Naive thymus-derived CD4-positive, alpha-beta T cell (primary cell): ENCODE measurements at regions of chr3 and their contacts with region 1.

Region 1: DNA sequence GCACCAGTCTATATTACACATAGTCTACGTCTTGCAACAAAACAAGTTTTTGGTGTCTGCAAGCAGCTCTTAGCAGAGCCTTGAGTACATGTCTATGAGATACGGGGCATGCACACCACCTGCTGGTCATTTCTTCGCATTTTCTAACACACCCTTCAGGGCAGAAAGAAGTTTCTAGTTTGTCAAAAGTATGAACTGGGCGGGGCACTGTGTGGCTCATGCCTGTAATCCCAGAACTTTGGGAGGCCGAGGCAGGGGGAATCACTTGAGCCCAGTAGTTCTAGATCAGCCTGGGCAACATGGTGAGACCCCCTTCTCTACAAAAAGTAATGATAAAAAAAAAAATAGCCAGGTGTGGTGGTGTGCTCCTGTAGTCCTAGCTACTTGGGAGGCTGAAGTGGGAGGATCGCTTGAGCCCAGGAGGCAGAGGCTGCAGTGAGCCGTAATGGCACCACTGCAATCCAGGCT is 64.2 kb upstream of the ARL8B start:
- DNase-seq: peak; percentile 22 to 75 (median 64)
- ATAC-seq: peak; percentile 92
- H3K4me3 ChIP-seq: no peak overlapping the region
- H3K4me3 Mint-ChIP-seq: peak overlapping the region in 1 of 10 donors; percentile 25
- H3K27ac ChIP-seq: no peak overlapping the region
- H3K27ac Mint-ChIP-seq: no peak overlapping the region
- H3K4me1 ChIP-seq: no peaks in the 10 kb centered on the region
- H3K4me1 Mint-ChIP-seq: peaks cover 0 to 38% (median 0%) of the 10 kb centered on the region in 7 donors
- H3K27me3 ChIP-seq: no peaks in the 10 kb centered on the region
- H3K27me3 Mint-ChIP-seq: peaks cover 0 to 4% (median 0%) of the 10 kb centered on the region in 5 donors

Region 2: GRCh38 chr3:4517643-4518311 is 540.1 kb before region 1 on chr3:
- CTCF ChIA-PET with region 1: interaction called, 4 read pairs
- POLR2A ChIA-PET with region 1: no interaction called
- intact Hi-C with region 1: loop called in 1 of 2 experiments (anchors 5 kb)
- DNase-seq: no peak
- ATAC-seq: no peak
- H3K4me3 ChIP-seq: no peak overlapping the region
- H3K4me3 Mint-ChIP-seq: peak overlapping the region; percentile 2 to 79 (median 50)
- H3K27ac ChIP-seq: peak overlapping the region; percentile 40
- H3K27ac Mint-ChIP-seq: peak overlapping the region; percentile 24 to 95 (median 79)
- H3K4me1 ChIP-seq: peaks cover 14 to 24% of the 10 kb centered on the region in 2 donors
- H3K4me1 Mint-ChIP-seq: peaks cover 31 to 62% (median 50%) of the 10 kb centered on the region in 7 donors
- H3K27me3 ChIP-seq: no peaks in the 10 kb centered on the region
- H3K27me3 Mint-ChIP-seq: no peaks in the 10 kb centered on the region

Region 3: DNA sequence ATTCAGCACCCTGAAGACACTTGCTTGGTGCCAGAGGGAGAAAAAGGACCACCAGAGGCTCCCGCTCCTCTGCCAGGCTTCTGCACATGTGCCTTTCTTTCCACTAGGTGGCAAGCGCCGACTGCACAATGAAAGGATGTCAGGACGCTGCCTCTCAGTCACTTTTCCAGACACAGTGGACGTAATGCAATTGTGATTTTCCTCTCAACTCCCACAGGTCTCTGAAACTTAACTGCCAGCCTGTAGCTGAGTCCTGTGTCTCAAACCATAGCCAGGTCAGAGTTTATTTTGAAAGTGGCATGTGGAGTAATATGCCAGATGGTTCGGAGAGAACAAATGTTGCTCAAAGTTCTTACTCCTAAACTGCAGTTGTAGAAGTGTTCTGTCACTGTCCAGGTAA is 401.8 kb before region 1 on chr3:
- CTCF ChIA-PET with region 1: no interaction called
- POLR2A ChIA-PET with region 1: no interaction called
- intact Hi-C with region 1: loop called in 1 of 2 experiments (anchors 1 kb)
- DNase-seq: no peak
- ATAC-seq: no peak
- H3K4me3 ChIP-seq: no peak overlapping the region
- H3K4me3 Mint-ChIP-seq: no peak overlapping the region
- H3K27ac ChIP-seq: no peak overlapping the region
- H3K27ac Mint-ChIP-seq: no peak overlapping the region
- H3K4me1 ChIP-seq: no peaks in the 10 kb centered on the region
- H3K4me1 Mint-ChIP-seq: no peaks in the 10 kb centered on the region
- H3K27me3 ChIP-seq: no peaks in the 10 kb centered on the region
- H3K27me3 Mint-ChIP-seq: no peaks in the 10 kb centered on the region

Region 4: GRCh38 chr3:4712143-4712542 is 345.7 kb before region 1 on chr3:
- CTCF ChIA-PET with region 1: interaction called, 98 read pairs
- POLR2A ChIA-PET with region 1: no interaction called
- intact Hi-C with region 1: loop called (anchors 1 kb)
- DNase-seq: no peak
- ATAC-seq: no peak
- H3K4me3 ChIP-seq: no peak overlapping the region
- H3K4me3 Mint-ChIP-seq: no peak overlapping the region
- H3K27ac ChIP-seq: no peak overlapping the region
- H3K27ac Mint-ChIP-seq: no peak overlapping the region
- H3K4me1 ChIP-seq: no peaks in the 10 kb centered on the region
- H3K4me1 Mint-ChIP-seq: peaks cover 0 to 38% (median 0%) of the 10 kb centered on the region in 7 donors
- H3K27me3 ChIP-seq: no peaks in the 10 kb centered on the region
- H3K27me3 Mint-ChIP-seq: no peaks in the 10 kb centered on the region

Region 5: DNA sequence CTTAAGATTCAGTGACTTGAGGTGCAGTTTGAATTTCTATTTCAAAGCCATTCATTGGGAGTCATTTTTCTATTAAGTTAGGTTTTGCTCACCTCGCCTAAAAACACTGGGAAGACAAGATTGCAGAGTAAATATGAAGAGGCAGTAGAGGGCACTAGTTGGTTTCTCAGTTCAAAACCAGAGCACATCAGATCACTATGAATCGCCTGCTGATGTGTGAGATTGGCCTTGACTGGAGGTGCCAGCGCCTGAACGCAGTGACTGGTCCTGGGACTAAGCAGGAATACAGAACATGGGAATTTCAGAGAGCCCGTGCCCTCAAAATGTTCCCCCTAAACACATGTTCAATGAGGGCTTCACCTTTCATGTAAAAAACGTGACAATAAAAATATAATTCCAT is 335.8 kb before region 1 on chr3:
- CTCF ChIA-PET with region 1: interaction called, 3 read pairs
- POLR2A ChIA-PET with region 1: no interaction called
- intact Hi-C with region 1: loop called in 1 of 2 experiments (anchors 1 kb)
- DNase-seq: peak in 2 of 9 donors; percentile 27 to 33
- ATAC-seq: peak; percentile 76
- H3K4me3 ChIP-seq: no peak overlapping the region
- H3K4me3 Mint-ChIP-seq: peak overlapping the region in 1 of 10 donors; percentile 33
- H3K27ac ChIP-seq: no peak overlapping the region
- H3K27ac Mint-ChIP-seq: peak overlapping the region in 2 of 9 donors; percentile 34 to 82
- H3K4me1 ChIP-seq: no peaks in the 10 kb centered on the region
- H3K4me1 Mint-ChIP-seq: peaks cover 0 to 67% (median 9%) of the 10 kb centered on the region in 7 donors
- H3K27me3 ChIP-seq: no peaks in the 10 kb centered on the region
- H3K27me3 Mint-ChIP-seq: no peaks in the 10 kb centered on the region

Region 6: GRCh38 chr3:4986782-4987537 is 70.9 kb before region 1 on chr3:
- CTCF ChIA-PET with region 1: no interaction called
- POLR2A ChIA-PET with region 1: no interaction called
- intact Hi-C with region 1: loop called in 1 of 2 experiments (anchors 2 kb)
- DNase-seq: peak; percentile 15 to 74 (median 47)
- ATAC-seq: peak; percentile 79
- H3K4me3 ChIP-seq: peak overlapping the region; percentile 45
- H3K4me3 Mint-ChIP-seq: peak overlapping the region; percentile 74 to 90 (median 84)
- H3K27ac ChIP-seq: peak overlapping the region; percentile 44
- H3K27ac Mint-ChIP-seq: peak overlapping the region; percentile 33 to 90 (median 78)
- H3K4me1 ChIP-seq: peaks cover 26 to 47% of the 10 kb centered on the region in 2 donors
- H3K4me1 Mint-ChIP-seq: peaks cover 16 to 59% (median 35%) of the 10 kb centered on the region in 7 donors
- H3K27me3 ChIP-seq: no peaks in the 10 kb centered on the region
- H3K27me3 Mint-ChIP-seq: no peaks in the 10 kb centered on the region